Right lobe of liver (tissue), 6 donors: ENCODE measurements at regions of chr5 and their contacts with region 1.

Region 1: GRCh38 chr5:142716963-142717362 is 31.1 kb upstream of the FGF1 start:
- DNase-seq: peak in 2 of 3 donors; percentile 48 to 54
- ATAC-seq: peak; percentile 44 to 53 (median 48)
- H3K4me3 ChIP-seq: no peak overlapping the region
- H3K27ac ChIP-seq: no peak overlapping the region
- H3K4me1 ChIP-seq: peaks cover 0 to 9% (median 4%) of the 10 kb centered on the region in 4 donors
- H3K27me3 ChIP-seq: no peaks in the 10 kb centered on the region
- CTCF ChIP-seq: peak; percentile 30 to 40 (median 37)
- POLR2A ChIP-seq: no peak

Region 2: GRCh38 chr5:142507531-142508372 is 209.2 kb before region 1 on chr5:
- intact Hi-C with region 1: no loop called
- DNase-seq: no peak
- ATAC-seq: peak in 1 of 4 donors; percentile 5
- H3K4me3 ChIP-seq: no peak overlapping the region
- H3K27ac ChIP-seq: peak overlapping the region in 1 of 3 donors; percentile 62
- H3K4me1 ChIP-seq: peaks cover 0 to 49% (median 19%) of the 10 kb centered on the region in 4 donors
- H3K27me3 ChIP-seq: no peaks in the 10 kb centered on the region
- CTCF ChIP-seq: no peak
- POLR2A ChIP-seq: no peak

Region 3: DNA sequence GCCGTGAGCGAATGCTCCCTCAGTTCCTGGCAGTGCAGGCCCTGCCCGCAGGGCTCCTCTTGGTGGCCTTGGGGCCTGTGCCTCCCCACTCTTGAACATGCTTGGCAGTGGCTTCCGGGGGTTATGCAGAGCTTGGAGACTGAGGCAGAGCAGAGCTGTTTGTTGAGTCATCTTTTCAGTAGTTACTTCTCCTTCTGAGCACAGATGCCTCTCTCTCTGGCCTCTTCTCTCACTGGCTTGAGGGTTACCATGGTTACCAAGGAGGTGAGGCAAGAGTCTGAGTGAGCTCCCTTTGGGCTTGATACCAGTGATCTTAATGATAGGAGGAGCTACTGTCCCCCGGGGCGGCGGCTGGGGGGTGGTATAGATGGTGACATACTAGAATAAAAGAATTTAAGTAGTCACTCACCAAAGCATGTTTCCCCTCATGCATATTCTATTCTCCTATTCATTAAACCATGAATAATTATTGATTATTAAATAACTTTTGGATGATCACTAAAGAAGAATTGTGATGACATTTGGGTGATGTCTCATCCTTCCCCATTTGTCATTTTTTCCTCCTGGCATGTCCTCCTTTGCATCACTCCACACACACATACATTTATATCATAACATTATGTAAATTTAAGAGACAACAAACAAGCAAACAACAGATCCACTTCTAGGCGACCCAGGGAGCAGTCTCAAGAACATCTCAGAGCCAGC is 164.3 kb after region 1 on chr5:
- intact Hi-C with region 1: loop called (anchors 5 kb)
- DNase-seq: no peak
- ATAC-seq: peak; percentile 7 to 36 (median 33)
- H3K4me3 ChIP-seq: no peak overlapping the region
- H3K27ac ChIP-seq: no peak overlapping the region
- H3K4me1 ChIP-seq: peaks cover 0 to 7% (median 0%) of the 10 kb centered on the region in 4 donors
- H3K27me3 ChIP-seq: no peaks in the 10 kb centered on the region
- CTCF ChIP-seq: no peak
- POLR2A ChIP-seq: no peak